Activated T-helper 1 cell treated with anti-CD3 and anti-CD28 coated beads, Interleukin-12 subunit alpha, Interleukin-12 subunit beta, Interleukin-2, Interleukin-4 antibody, amounts not matched to agents 30 ng/mL and 10 ng/mL and 1 ng/mL, durations not matched to agents 14 hours and 24 hours and 36 hours (primary cell): ENCODE measurements at regions of chr6 and their contacts with region 1.

Region 1: DNA sequence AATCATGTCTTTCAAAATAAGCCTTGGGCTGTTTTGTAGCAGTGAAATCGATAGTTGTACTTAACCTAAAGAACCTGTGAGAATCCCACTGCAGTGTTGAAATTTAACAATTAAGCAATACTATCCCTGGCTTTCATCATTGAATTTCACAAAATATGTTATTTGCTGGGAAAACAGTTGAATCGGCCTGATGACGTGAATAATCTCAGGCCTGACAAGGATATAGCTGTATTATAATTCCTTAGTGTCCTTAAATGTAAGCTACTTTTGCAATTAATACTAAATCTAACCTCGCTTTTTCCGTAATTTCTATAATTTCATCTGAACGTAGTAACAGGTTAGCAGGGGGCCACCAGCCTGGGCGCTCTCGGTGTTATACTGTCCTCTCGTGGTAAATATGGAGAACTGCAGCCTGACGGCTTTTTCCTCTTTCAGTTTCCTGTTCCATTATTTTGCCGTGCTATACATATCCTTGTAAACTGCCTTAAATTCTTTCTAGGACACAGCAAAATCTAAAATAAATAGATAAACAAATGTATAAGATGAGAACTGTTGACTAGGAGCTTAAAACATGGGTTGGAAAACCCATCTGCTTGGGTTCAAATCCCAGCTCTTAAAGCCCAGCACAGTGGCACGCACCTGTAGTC is 24.0 kb downstream of the MTFR2 start:
- DNase-seq: peak; percentile 35
- H3K4me3 Mint-ChIP-seq: peak overlapping the region; percentile 0
- H3K27ac Mint-ChIP-seq: peak overlapping the region; percentile 25
- H3K4me1 Mint-ChIP-seq: peaks cover 27% of the 10 kb centered on the region
- H3K27me3 Mint-ChIP-seq: no peaks in the 10 kb centered on the region

Region 2: DNA sequence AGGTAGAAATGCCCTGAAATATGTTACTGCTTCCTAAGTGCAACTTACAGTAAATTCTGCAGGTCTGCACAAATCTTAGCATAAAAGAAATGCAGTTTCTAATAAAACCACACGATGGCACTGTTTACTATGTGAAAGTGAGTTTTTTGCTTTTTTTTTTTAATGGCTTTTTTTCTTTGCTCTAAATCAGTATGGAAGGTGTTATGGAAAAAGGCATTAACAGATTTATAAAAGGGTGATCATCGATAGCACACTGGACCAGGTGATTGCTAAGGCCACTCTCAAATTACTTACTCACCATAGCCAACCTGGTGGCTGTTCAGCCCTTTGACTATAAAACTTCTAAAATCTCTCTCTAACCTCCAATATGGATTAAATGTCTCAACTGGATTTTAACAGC is 774.5 kb before region 1 on chr6:
- intact Hi-C with region 1: loop called (anchors 1 kb)
- DNase-seq: no peak
- H3K4me3 Mint-ChIP-seq: no peak overlapping the region
- H3K27ac Mint-ChIP-seq: no peak overlapping the region
- H3K4me1 Mint-ChIP-seq: peaks cover 5% of the 10 kb centered on the region
- H3K27me3 Mint-ChIP-seq: no peaks in the 10 kb centered on the region

Region 3: GRCh38 chr6:135909737-135910387 is 316.3 kb before region 1 on chr6:
- intact Hi-C with region 1: loop called (anchors 2 kb)
- DNase-seq: peak; percentile 49
- H3K4me3 Mint-ChIP-seq: no peak overlapping the region
- H3K27ac Mint-ChIP-seq: peak overlapping the region; percentile 24
- H3K4me1 Mint-ChIP-seq: peaks cover 30% of the 10 kb centered on the region
- H3K27me3 Mint-ChIP-seq: no peaks in the 10 kb centered on the region

Region 4: GRCh38 chr6:136031982-136032381 is 194.2 kb before region 1 on chr6:
- intact Hi-C with region 1: loop called (anchors 1 kb)
- DNase-seq: no peak
- H3K4me3 Mint-ChIP-seq: no peak overlapping the region
- H3K27ac Mint-ChIP-seq: no peak overlapping the region
- H3K4me1 Mint-ChIP-seq: no peaks in the 10 kb centered on the region
- H3K27me3 Mint-ChIP-seq: peaks cover 9% of the 10 kb centered on the region

Region 5: GRCh38 chr6:136344420-136344819 is 118.3 kb after region 1 on chr6:
- intact Hi-C with region 1: no loop called
- DNase-seq: no peak
- H3K4me3 Mint-ChIP-seq: no peak overlapping the region
- H3K27ac Mint-ChIP-seq: no peak overlapping the region
- H3K4me1 Mint-ChIP-seq: no peaks in the 10 kb centered on the region
- H3K27me3 Mint-ChIP-seq: peaks cover 6% of the 10 kb centered on the region